ENCODE measurements at regions of chr1 and their contacts with region 1.

Region 1: DNA sequence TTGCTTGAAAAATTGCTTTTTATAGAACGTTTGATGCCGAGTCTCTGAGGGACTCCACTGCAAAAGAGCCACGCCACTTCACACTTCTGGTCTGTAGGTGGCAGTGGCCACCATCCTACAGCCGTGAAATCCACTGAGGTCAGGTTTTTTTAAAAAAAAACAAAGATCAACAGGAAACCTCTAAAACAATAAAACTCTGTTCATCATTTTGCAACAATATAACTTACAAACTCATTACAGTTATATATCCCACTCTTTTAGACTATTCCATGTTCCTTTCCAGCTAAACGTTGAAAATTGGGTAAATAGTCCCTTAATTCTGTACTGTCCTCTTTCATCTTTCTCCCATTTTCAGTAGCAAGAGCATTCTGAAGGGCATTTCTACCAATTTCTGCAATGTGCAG is 64.6 kb upstream of the FMN2 start:
- DNase-seq: no peak
- ATAC-seq: no peak
- H3K4me3 ChIP-seq: no peak overlapping the region
- H3K27ac ChIP-seq: no peak overlapping the region
- H3K4me1 ChIP-seq: no peaks in the 10 kb centered on the region
- H3K27me3 ChIP-seq: peaks cover 0 to 4% (median 0%) of the 10 kb centered on the region in 7 donors
- CTCF ChIP-seq: peak; percentile 52 to 86 (median 76)

Region 2: GRCh38 chr1:239511870-239512269 is 515.2 kb before region 1 on chr1:
- intact Hi-C with region 1: no loop called
- DNase-seq: no peak
- ATAC-seq: no peak
- H3K4me3 ChIP-seq: no peak overlapping the region
- H3K27ac ChIP-seq: no peak overlapping the region
- H3K4me1 ChIP-seq: no peaks in the 10 kb centered on the region
- H3K27me3 ChIP-seq: no peaks in the 10 kb centered on the region
- CTCF ChIP-seq: no peak

Region 3: DNA sequence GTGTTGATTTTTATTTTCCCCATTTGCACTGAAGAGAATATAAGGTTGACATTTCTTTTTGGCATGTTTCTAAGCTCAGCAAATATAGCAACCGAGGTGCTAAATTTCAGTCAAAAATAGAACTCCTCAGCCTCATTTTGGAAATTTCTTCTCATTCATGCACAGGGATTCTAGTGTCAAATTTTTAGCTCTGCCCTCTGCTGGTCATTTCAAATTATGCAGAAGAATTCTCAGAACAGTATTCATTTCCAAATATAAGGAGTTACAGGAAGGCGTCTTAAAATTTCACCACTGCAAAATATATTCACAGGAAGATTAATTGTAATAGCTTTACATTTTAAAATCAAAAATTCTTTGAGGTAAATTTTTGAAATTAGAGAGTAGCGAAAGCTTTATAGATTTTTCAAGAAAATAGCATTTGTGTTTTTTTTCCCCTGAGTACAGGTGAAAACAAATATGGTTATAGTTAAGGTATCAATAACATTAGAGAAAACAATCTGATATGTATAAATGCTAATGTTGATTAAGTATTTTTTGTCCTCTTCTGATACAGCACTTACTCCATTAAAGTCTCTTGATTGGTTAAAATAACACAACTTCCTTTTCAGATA is 122.5 kb after region 1 on chr1:
- intact Hi-C with region 1: loop called in 8 of 10 experiments (anchors 1 to 10 kb)
- DNase-seq: no peak
- ATAC-seq: no peak
- H3K4me3 ChIP-seq: no peak overlapping the region
- H3K27ac ChIP-seq: no peak overlapping the region
- H3K4me1 ChIP-seq: no peaks in the 10 kb centered on the region
- H3K27me3 ChIP-seq: peaks cover 0 to 4% (median 0%) of the 10 kb centered on the region in 7 donors
- CTCF ChIP-seq: peak; percentile 28 to 76 (median 69)

Region 4: DNA sequence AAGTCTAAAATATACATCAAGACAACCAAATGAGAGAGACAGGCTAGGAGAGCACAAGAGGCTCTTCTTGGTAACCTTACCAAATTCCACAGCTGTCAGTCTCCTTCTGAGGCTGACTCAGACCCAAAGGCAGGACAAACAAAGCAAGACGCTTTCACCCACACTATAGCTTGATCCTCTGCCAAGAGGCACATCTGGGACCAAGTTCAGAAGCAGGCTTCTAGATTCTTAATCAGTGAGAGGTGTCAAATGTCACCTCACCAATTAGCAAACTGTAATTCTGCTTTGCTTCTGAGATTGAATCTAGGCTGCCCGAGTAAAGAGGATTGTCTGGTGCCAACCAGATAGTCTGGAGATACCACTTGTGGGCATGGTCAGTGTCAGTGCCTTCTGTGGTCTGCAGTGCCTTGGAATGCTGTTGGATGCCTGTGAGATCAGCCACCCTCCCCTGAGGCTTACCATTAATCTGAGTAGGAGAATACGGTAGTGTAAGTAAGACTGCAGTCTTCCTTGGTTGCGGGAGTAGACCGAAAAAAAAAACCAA is 215.6 kb after region 1 on chr1:
- intact Hi-C with region 1: no loop called
- DNase-seq: no peak
- ATAC-seq: no peak
- H3K4me3 ChIP-seq: no peak overlapping the region
- H3K27ac ChIP-seq: no peak overlapping the region
- H3K4me1 ChIP-seq: no peaks in the 10 kb centered on the region
- H3K27me3 ChIP-seq: no peaks in the 10 kb centered on the region
- CTCF ChIP-seq: no peak

Region 5: GRCh38 chr1:240691521-240692338 is 664.7 kb after region 1 on chr1:
- intact Hi-C with region 1: loop called in 1 of 10 experiments (anchors 10 kb)
- DNase-seq: peak in 1 of 2 donors; percentile 4
- ATAC-seq: peak in 1 of 8 donors; percentile 58
- H3K4me3 ChIP-seq: no peak overlapping the region
- H3K27ac ChIP-seq: no peak overlapping the region
- H3K4me1 ChIP-seq: no peaks in the 10 kb centered on the region
- H3K27me3 ChIP-seq: peaks cover 0 to 10% (median 0%) of the 10 kb centered on the region in 7 donors
- CTCF ChIP-seq: peak in 7 of 9 donors; percentile 35 to 59 (median 42)

Measured in heart right ventricle (tissue), 16 donors.